WTC11 (cell line): ENCODE measurements at regions of chr7 and their contacts with region 1.

Region 1: DNA sequence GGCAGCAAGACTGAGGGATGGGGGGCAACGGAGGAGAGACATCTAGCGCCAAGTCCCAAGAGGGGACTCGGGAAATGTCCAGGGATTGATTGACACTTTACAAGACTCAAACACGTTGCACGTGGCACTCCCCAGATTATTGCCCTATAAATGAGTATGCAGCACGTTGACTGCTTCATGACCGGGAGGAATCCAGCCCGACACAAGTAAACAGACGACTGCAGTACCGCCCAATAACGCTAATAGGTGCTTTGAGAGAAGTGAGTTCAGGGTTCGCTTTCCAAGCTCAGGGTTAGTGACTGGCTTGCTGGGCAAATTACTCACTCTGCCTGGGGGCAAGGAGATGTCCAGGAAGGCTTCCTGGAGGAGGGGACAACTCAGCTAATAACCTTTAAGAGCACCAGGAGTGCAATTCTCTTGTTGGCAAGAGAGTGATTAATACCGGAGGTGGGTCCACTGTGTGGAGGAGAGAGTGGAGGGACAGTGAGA is 73.3 kb upstream of the MYL10 start:
- DNase-seq: no peak
- ATAC-seq: peak; percentile 83
- H3K4me3 Mint-ChIP-seq: no peak overlapping the region
- H3K27ac Mint-ChIP-seq: peak overlapping the region; percentile 67
- H3K4me1 Mint-ChIP-seq: peaks cover 6% of the 10 kb centered on the region
- H3K27me3 Mint-ChIP-seq: no peaks in the 10 kb centered on the region
- CTCF ChIP-seq: no peak

Region 2: GRCh38 chr7:101722247-101722646 is 19.8 kb after region 1 on chr7:
- CTCF ChIA-PET with region 1: interaction called, 10 read pairs
- POLR2A ChIA-PET with region 1: no interaction called
- DNase-seq: no peak
- ATAC-seq: no peak; the same call in 1 of the 2 replicates
- H3K4me3 Mint-ChIP-seq: no peak overlapping the region
- H3K27ac Mint-ChIP-seq: no peak overlapping the region
- H3K4me1 Mint-ChIP-seq: no peaks in the 10 kb centered on the region
- H3K27me3 Mint-ChIP-seq: peaks cover 8% of the 10 kb centered on the region; the same call in 1 of the 2 replicates
- CTCF ChIP-seq: no peak